Caco-2 (cell line): ENCODE measurements at regions of chr5 and their contacts with region 1.

Region 1: GRCh38 chr5:146007270-146007669 is 70.9 kb downstream of the SH3RF2 start:
- DNase-seq: peak; percentile 19 to 42
- H3K4me3 ChIP-seq: no peak overlapping the region
- H3K4me3 Mint-ChIP-seq: no peak overlapping the region
- H3K27ac Mint-ChIP-seq: no peak overlapping the region
- H3K4me1 ChIP-seq: no peaks in the 10 kb centered on the region; the same call in 1 of the 2 replicates
- H3K4me1 Mint-ChIP-seq: peaks cover 19% of the 10 kb centered on the region
- H3K27me3 ChIP-seq: no peaks in the 10 kb centered on the region
- H3K27me3 Mint-ChIP-seq: no peaks in the 10 kb centered on the region
- CTCF ChIP-seq: peak in 1 of 2 experiments; percentile 29

Region 2: GRCh38 chr5:145908205-145908945 is 98.9 kb before region 1 on chr5:
- CTCF ChIA-PET with region 1: no interaction called
- POLR2A ChIA-PET with region 1: no interaction called
- intact Hi-C with region 1: loop called (anchors 1 kb)
- DNase-seq: peak in 1 of 2 experiments; percentile 52
- H3K4me3 ChIP-seq: no peak overlapping the region
- H3K4me3 Mint-ChIP-seq: no peak overlapping the region
- H3K27ac Mint-ChIP-seq: peak overlapping the region; percentile 18
- H3K4me1 ChIP-seq: peaks cover 14% of the 10 kb centered on the region; the same call in 1 of the 2 replicates
- H3K4me1 Mint-ChIP-seq: peaks cover 29% of the 10 kb centered on the region
- H3K27me3 ChIP-seq: no peaks in the 10 kb centered on the region
- H3K27me3 Mint-ChIP-seq: no peaks in the 10 kb centered on the region
- CTCF ChIP-seq: peak; percentile 43 to 69